ENCODE measurements at regions of chr9 and their contacts with region 1.

Region 1: GRCh38 chr9:79382468-79382867 is 189.3 kb upstream of the TLE4 start:
- DNase-seq: no peak
- ATAC-seq: no peak
- H3K4me3 ChIP-seq: no peak overlapping the region
- H3K27ac ChIP-seq: no peak overlapping the region
- H3K4me1 ChIP-seq: no peaks in the 10 kb centered on the region
- H3K27me3 ChIP-seq: no peaks in the 10 kb centered on the region
- CTCF ChIP-seq: no peak

Region 2: DNA sequence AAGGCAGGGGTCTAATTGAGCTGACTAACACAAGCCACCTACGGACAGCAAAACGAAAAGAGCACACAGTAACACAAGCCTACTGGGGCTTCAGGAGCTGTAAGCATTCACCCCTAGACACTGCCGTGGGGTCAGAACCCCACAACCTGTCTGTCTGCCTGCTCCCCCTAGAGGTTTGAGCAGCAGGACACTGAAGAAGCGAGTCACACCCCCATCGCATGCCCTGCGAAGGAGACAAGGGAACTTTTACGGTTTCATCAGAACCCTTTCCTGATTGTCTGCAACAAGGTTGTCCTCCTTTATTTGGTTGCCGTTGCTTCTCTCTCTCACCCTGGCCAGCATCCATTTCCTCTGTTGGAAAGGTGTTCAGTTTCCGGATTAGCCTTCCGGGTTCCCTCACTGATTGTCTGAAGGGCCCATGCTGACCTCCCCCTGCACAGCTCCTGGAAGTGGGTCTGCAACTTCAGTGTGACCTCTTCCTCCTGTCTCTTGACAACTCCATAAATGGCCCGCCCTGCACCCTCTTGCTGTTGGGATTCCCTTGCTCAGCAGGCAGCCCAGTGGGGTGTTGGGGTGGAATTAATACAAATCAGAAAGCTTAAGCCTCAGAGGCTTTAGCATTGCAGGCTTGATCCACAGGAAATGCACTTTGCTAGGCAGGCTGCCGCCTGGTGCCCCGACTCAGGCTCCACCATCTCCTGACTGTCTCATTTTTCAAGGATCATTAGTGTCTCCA is 69.6 kb before region 1 on chr9:
- intact Hi-C with region 1: no loop called
- DNase-seq: no peak
- ATAC-seq: no peak
- H3K4me3 ChIP-seq: no peak overlapping the region
- H3K27ac ChIP-seq: no peak overlapping the region
- H3K4me1 ChIP-seq: no peaks in the 10 kb centered on the region
- H3K27me3 ChIP-seq: peaks cover 0 to 12% (median 0%) of the 10 kb centered on the region in 7 donors
- CTCF ChIP-seq: no peak

Region 3: GRCh38 chr9:79325501-79325900 is 57.0 kb before region 1 on chr9:
- intact Hi-C with region 1: loop called in 1 of 10 experiments (anchors 10 kb)
- DNase-seq: no peak
- ATAC-seq: no peak
- H3K4me3 ChIP-seq: no peak overlapping the region
- H3K27ac ChIP-seq: no peak overlapping the region
- H3K4me1 ChIP-seq: no peaks in the 10 kb centered on the region
- H3K27me3 ChIP-seq: no peaks in the 10 kb centered on the region
- CTCF ChIP-seq: no peak

Region 4: GRCh38 chr9:79357616-79358015 is 24.9 kb before region 1 on chr9:
- intact Hi-C with region 1: loop called in 1 of 10 experiments (anchors 2 kb)
- DNase-seq: peak in 1 of 2 donors; percentile 10
- ATAC-seq: peak in 3 of 8 donors; percentile 42 to 58 (median 42)
- H3K4me3 ChIP-seq: no peak overlapping the region
- H3K27ac ChIP-seq: peak overlapping the region in 1 of 10 donors; percentile 23
- H3K4me1 ChIP-seq: peaks cover 0 to 19% (median 0%) of the 10 kb centered on the region in 9 donors
- H3K27me3 ChIP-seq: peaks cover 0 to 7% (median 0%) of the 10 kb centered on the region in 7 donors
- CTCF ChIP-seq: no peak

Measured in heart right ventricle (tissue), 16 donors.